Common myeloid progenitor, CD34-positive (primary cell): ENCODE measurements at regions of chr11 and their contacts with region 1.

Region 1: GRCh38 chr11:6481012-6481923 is at the starts of genes ARFIP2 and TIMM10B:
- DNase-seq: peak; percentile 98 to 99 (median 99)
- H3K4me3 ChIP-seq: peak within 1 kb of the TSS; percentile 41 to 92 (median 78)
- H3K27ac ChIP-seq: peak within 1 kb of the TSS; percentile 91 to 96
- H3K4me1 ChIP-seq: peaks cover 6 to 23% (median 21%) of the 10 kb centered on the region in 4 experiments
- H3K27me3 ChIP-seq: no peaks in the 10 kb centered on the region

Region 2: DNA sequence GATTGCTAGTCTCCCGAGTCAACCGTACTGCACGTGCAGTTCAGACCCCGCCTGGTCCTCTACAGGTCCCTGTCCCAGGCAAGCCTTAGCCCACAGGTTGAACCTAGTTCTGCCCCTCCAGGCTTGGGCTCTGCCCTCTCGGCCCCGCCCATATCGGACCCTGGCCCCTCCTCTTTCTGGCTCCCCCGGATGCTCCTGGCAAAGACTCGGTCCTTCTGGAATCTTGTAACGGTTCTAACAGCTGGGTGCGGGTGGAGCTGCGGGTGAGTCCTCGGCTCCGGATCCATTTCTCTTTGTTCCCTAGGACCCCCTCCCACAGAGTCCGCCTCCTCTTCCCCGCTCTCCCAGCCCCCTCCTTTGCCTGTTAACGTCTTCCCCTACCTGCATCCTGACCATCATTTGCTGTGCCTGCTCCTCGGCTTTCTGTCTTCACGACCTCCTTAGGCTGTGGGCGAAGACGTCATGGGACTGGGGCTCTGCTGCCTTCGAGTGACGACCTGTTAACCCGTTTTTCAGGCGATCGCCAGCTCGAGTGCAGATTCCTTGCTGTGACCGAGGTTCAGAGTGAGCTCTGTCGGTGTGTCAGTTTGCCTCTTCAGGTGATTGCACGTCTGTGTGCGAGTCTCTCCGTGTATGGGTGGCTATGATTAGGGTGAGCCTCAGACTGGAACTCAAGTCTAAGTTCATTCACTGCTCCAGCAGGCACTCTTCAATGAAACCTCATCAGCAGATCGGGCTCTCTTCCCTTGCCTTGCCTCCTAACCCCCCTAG is 16.0 kb after region 1 on chr11 and contains the start of gene DNHD1:
- CTCF ChIA-PET with region 1: interaction called, 12 read pairs
- POLR2A ChIA-PET with region 1: interaction called, 5 read pairs
- DNase-seq: no peak
- H3K4me3 ChIP-seq: no peak within 1 kb of the TSS
- H3K27ac ChIP-seq: no peak within 1 kb of the TSS
- H3K4me1 ChIP-seq: no peaks in the 10 kb centered on the region
- H3K27me3 ChIP-seq: no peaks in the 10 kb centered on the region

Region 3: GRCh38 chr11:6505577-6506240 is 24.4 kb after region 1 on chr11:
- CTCF ChIA-PET with region 1: interaction called, 19 read pairs
- POLR2A ChIA-PET with region 1: no interaction called
- DNase-seq: peak; percentile 47 to 67 (median 65)
- H3K4me3 ChIP-seq: no peak overlapping the region
- H3K27ac ChIP-seq: no peak overlapping the region
- H3K4me1 ChIP-seq: no peaks in the 10 kb centered on the region
- H3K27me3 ChIP-seq: no peaks in the 10 kb centered on the region

Region 4: DNA sequence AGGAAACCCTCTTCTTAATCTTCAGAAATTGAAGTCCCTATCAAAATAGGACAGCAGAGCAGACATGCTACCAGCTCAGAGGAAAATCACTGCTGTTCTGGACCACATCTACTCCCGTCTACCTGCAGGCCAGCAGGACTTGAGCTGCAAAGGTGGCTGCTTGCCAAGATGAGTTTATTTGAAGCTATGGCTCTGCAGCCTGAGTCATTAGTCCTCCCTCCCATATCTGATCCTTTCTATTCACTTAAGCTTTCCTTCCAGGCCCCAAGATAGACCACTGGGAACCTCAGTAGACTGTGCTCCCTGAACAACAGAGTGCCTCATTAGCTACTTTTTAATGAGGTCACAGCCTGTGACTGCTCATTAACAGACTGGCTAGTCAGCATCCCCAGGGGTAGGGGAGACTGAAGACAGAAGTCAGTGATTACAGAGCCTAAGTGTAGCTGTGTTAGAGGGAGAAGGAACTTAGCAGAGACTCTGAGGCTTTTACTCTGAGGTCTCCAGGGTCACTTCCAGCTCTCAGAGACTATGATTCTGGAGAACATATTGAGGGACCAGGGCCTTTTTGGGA is 374.8 kb after region 1 on chr11:
- CTCF ChIA-PET with region 1: no interaction called
- POLR2A ChIA-PET with region 1: no interaction called
- DNase-seq: no peak
- H3K4me3 ChIP-seq: no peak overlapping the region
- H3K27ac ChIP-seq: no peak overlapping the region
- H3K4me1 ChIP-seq: no peaks in the 10 kb centered on the region
- H3K27me3 ChIP-seq: no peaks in the 10 kb centered on the region